ENCODE measurements at regions of chr17 and their contacts with region 1.

Region 1: DNA sequence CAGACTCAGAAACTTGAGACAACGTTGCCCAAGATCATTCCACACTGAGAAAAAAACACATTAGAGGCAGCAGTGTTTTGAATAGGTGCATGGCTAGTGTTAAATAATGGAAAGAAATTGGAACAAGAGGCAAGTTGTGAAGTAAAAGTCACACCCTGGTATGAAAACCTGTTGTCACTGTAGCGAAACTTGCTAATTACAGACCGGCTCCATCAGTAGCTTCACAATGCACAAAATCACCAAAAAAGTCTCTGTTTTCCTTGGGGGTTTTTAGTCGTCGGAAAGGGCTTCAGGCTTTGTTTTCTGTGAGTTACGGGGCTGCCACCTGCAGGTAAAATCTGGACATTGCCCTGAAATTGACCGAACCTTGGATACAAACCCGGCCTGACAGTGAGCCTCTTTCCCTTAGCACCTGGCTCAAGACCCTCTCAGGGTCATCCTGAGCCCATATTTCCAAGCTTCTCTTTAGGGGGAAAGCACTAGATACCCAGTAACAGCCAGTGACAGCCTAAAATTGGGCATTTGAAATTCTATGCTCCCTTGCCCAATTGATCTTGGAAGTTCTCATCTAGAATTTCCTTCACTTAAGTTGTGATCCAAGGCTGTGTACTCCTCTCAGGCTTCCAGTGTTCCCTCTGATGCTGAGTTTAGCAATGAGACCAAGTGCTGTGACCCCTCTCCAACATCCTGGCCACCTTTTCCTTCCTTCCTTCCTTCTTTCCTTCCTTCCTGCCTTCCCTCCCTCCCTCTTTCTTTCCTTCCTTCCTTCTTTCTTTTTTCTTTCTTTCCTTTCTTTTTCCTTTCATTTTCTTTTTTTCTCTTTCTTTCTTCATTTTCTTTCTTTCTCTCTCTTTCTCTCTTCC is 7.2 kb upstream of the GRB2 start:
- DNase-seq: peak; percentile 93
- H3K4me3 Mint-ChIP-seq: peak overlapping the region; percentile 8
- H3K27ac Mint-ChIP-seq: no peak overlapping the region
- H3K4me1 Mint-ChIP-seq: peaks cover 28% of the 10 kb centered on the region
- H3K27me3 Mint-ChIP-seq: peaks cover 16% of the 10 kb centered on the region

Region 2: GRCh38 chr17:75271233-75271954 is 141.3 kb before region 1 on chr17:
- intact Hi-C with region 1: loop called (anchors 1 kb)
- DNase-seq: peak; percentile 97
- H3K4me3 Mint-ChIP-seq: peak overlapping the region; percentile 89
- H3K27ac Mint-ChIP-seq: peak overlapping the region; percentile 87
- H3K4me1 Mint-ChIP-seq: peaks cover 32% of the 10 kb centered on the region
- H3K27me3 Mint-ChIP-seq: no peaks in the 10 kb centered on the region

Region 3: DNA sequence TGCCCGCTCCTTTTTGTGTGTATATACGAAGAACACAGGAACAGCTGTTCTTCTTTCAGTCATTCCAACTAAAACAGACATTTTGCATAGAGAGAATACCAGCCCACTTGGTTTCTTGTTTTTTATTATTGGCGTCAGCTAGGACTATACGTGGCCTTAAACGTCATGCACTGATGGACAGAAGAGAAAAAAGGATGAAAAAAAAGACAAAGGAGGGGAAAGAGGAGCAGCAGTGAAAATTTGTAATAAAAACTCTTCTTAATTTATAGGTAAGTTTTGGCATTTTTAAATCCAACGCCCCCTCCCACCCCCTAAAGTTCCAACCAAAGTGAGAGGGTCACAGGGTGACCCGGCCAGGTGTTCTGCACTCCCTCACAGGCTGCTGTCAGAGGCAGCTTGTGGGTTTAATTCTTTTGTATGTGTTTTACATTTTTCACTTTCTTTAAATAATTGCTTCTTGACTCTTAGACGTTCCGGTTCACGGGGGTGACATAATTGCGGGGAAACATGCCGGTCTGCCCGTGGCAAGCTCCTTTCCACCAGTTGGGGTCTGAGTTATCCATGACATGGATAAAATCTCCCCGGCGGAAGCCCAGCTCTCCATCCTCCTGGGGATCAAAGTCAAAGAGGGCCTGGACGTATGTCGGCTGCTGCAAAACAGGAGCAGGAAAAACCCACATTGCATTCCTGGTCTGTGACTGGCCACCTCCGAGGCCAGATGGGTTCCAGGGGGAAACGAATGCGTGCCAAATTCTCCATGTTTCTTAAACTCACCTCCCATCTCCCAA is 92.6 kb before region 1 on chr17:
- intact Hi-C with region 1: loop called (anchors 1 kb)
- DNase-seq: no peak
- H3K4me3 Mint-ChIP-seq: no peak overlapping the region
- H3K27ac Mint-ChIP-seq: no peak overlapping the region
- H3K4me1 Mint-ChIP-seq: peaks cover 14% of the 10 kb centered on the region
- H3K27me3 Mint-ChIP-seq: no peaks in the 10 kb centered on the region

Region 4: DNA sequence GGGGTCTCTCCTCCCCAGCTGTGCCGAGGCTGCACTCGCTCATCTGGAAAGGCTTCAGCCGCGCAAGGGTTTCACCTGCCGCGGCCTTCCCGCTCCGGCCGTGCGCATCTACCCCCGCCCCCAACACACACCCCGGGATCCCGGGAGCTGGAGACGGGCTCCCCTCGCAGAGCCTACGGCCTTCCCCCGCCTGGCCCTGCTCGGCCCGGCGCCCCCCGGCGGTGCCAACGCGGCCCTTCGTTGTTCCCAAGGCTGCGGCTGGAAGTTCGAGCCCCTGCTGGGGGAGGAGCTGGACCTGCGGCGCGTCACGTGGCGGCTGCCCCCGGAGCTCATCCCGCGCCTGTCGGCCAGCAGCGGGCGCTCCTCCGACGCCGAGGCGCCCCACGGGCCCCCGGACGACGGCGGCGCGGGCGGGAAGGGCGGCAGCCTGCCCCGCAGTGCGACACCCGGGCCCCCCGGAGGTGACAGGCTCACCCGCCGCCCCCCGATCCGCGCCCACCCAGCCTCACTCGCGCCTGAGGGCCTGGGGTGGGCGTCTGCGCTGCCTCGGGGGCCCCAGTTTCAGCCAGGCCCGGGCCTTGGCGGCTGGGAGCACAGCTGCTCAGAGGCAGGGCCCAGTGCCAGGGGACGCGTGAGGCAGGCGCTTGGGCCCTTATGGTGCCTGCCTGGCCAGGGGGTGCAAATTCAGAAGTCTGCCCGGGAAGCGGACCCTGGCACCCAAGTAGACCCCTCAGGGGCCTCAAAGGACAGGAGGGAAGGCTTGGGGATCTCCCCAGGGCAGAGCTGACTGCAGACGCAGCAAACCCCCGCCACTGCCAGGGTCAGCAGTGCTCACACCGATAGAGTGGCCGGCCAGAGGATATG is 341.1 kb after region 1 on chr17:
- intact Hi-C with region 1: no loop called
- DNase-seq: peak; percentile 93
- H3K4me3 Mint-ChIP-seq: peak overlapping the region; percentile 75
- H3K27ac Mint-ChIP-seq: no peak overlapping the region
- H3K4me1 Mint-ChIP-seq: peaks cover 16% of the 10 kb centered on the region
- H3K27me3 Mint-ChIP-seq: no peaks in the 10 kb centered on the region